ENCODE measurements at regions of chr18 and their contacts with region 1.

Region 1: DNA sequence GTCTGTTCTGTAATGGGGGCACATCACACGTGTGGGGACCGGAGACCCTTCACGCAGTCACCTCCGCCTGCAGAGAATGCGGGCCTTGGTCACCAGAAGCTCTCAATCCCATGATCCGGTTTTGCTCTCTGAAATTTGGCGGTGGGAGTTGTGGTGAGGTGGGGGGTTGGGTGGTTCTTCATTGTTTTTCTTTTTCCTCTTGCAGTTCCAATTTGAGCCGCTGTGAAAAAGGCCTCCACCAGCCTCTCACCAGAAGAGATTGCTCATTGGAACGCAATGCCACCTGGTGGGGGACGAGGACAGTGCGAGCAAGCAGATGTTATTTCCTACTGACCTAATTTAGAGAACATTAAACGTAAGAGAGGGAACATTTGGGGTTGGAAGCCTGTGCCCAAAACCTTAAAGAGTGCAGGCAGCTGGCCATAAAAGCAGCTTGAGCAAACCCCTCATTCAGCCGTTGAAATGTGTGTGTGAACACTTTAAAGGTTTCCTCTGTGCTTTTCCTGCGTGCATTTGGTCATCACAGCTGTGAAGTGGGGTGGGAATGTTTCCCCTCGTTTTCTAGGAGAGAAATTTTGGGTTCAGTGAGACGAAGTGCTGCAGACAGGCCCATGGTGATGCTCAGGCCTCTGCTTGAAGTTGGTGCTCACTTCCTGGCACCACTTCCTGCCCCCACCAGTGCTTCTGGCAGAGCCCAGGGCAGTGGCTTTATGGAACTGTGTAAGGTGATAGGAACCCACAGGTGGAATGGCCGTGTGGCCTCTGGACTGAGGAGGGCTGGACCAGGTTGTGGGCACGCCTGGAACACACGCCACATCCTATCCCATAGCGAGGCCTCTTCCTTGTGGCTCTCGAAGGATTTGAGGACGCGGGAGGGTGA is 61.7 kb downstream of the ZCCHC2 start:
- DNase-seq: peak; percentile 77 to 93
- H3K4me3 ChIP-seq: peak overlapping the region in 1 of 4 experiments; percentile 43; a peak in 2 of 8 replicates
- H3K27ac ChIP-seq: no peak overlapping the region; the same call in 1 of the 2 replicates
- H3K4me1 ChIP-seq: peaks cover 2 to 8% (median 6%) of the 10 kb centered on the region in 4 experiments; a peak in 6 of 7 replicates
- H3K27me3 ChIP-seq: no peaks in the 10 kb centered on the region
- CTCF ChIP-seq: peak; percentile 91 to 100 (median 98)
- EP300 ChIP-seq: no peak
- POLR2A ChIP-seq: no peak
- RAD21 ChIP-seq: peak; percentile 83 to 90

Region 2: DNA sequence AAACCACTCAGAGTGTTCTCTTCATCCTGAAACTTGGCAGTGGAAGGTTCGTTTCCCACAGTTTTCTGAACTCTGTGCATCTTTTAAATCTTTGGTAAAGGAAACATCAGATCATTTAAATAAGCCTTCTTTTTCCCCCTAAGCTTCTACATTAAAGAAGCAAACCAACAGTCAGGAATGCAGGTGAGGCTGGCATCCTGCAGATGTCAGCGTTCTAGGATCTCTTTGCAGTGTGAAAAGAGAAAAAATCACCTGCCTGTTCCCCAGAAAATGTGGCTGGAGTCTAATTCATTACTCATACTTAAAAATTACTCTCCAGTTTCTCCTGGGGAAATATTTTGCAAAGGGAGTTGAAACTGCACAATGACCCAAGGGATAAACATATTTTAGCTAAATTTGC is 126.1 kb before region 1 on chr18:
- CTCF ChIA-PET with region 1: interaction called, 28 read pairs
- POLR2A ChIA-PET with region 1: no interaction called
- DNase-seq: no peak
- H3K4me3 ChIP-seq: no peak overlapping the region
- H3K27ac ChIP-seq: no peak overlapping the region
- H3K4me1 ChIP-seq: peaks cover 0 to 3% (median 0%) of the 10 kb centered on the region in 4 experiments; a peak in 1 of 7 replicates
- H3K27me3 ChIP-seq: no peaks in the 10 kb centered on the region
- CTCF ChIP-seq: peak in 2 of 3 experiments; percentile 18 to 37; a peak in 2 of 4 replicates
- EP300 ChIP-seq: no peak
- POLR2A ChIP-seq: no peak
- RAD21 ChIP-seq: peak in 1 of 2 experiments; percentile 28; a peak in 1 of 4 replicates

Region 3: DNA sequence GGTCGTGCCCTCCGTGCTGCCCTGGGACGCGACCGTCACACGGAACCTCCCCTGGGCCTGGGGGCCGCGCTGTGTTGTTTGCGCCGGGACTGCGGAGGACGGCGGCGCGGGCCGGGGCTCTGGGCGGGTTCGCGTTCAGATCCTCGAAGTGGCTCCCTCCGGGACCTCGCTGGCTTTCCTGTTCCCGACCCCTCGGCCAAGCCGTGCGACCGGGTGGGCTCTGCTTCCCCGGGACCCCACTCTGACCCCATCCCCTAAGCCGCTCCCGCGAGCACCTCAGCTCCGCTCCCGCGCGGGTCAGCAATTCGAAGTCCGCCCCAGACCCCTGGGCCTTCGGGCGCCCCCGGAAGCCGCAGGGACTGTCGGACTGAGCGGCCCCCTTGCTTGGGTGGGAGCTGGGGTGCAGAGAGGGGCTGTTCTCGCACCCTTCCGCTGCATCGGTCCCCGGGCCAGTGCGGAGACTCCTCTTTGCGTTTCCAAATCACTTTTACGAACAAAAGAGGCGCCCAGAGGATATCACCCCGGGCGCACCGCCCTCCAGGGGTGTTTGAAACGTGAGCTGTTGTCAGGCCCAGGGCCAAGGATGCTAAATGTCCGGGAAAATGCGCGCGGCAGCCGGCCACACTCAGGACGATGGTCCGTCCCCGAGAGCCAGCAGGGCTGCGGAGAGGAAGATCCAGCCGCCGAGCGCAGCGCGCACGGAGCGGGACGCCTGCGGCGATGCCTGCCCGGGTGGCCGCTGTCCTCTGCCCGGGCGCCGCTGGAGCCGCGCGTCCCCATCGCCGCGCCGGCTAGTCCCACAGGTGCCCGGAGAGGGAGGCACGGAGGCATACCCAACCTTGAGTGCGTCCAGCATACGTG is 11.9 kb after region 1 on chr18:
- CTCF ChIA-PET with region 1: interaction called, 34 read pairs
- POLR2A ChIA-PET with region 1: no interaction called
- DNase-seq: peak in 1 of 2 experiments; percentile 73
- H3K4me3 ChIP-seq: peak overlapping the region; percentile 42 to 71 (median 62)
- H3K27ac ChIP-seq: no peak overlapping the region
- H3K4me1 ChIP-seq: peaks cover 0 to 3% (median under 1%) of the 10 kb centered on the region in 4 experiments; a peak in 2 of 7 replicates
- H3K27me3 ChIP-seq: peaks cover 16 to 23% (median 22%) of the 10 kb centered on the region in 4 experiments
- CTCF ChIP-seq: no peak
- EP300 ChIP-seq: no peak
- POLR2A ChIP-seq: no peak
- RAD21 ChIP-seq: 0 out of 4 replicates have a peak, but pooled peaks of 1 of the 2 experiments have one; percentile 1

Region 4: GRCh38 chr18:62625019-62625418 is 40.5 kb after region 1 on chr18:
- CTCF ChIA-PET with region 1: interaction called, 13 read pairs
- POLR2A ChIA-PET with region 1: no interaction called
- DNase-seq: no peak
- H3K4me3 ChIP-seq: no peak overlapping the region
- H3K27ac ChIP-seq: no peak overlapping the region
- H3K4me1 ChIP-seq: no peaks in the 10 kb centered on the region
- H3K27me3 ChIP-seq: no peaks in the 10 kb centered on the region
- CTCF ChIP-seq: no peak
- EP300 ChIP-seq: no peak
- POLR2A ChIP-seq: no peak
- RAD21 ChIP-seq: no peak

Region 5: GRCh38 chr18:62957885-62958472 is 373.5 kb after region 1 on chr18:
- CTCF ChIA-PET with region 1: interaction called, 26 read pairs
- POLR2A ChIA-PET with region 1: no interaction called
- DNase-seq: peak; percentile 15 to 87
- H3K4me3 ChIP-seq: no peak overlapping the region
- H3K27ac ChIP-seq: no peak overlapping the region
- H3K4me1 ChIP-seq: peaks cover 0 to 6% (median 2%) of the 10 kb centered on the region in 4 experiments; a peak in 3 of 7 replicates
- H3K27me3 ChIP-seq: no peaks in the 10 kb centered on the region
- CTCF ChIP-seq: peak in 2 of 3 experiments; percentile 47 to 55; a peak in 3 of 4 replicates
- EP300 ChIP-seq: no peak
- POLR2A ChIP-seq: no peak
- RAD21 ChIP-seq: peak; percentile 62 to 64

Region 6: DNA sequence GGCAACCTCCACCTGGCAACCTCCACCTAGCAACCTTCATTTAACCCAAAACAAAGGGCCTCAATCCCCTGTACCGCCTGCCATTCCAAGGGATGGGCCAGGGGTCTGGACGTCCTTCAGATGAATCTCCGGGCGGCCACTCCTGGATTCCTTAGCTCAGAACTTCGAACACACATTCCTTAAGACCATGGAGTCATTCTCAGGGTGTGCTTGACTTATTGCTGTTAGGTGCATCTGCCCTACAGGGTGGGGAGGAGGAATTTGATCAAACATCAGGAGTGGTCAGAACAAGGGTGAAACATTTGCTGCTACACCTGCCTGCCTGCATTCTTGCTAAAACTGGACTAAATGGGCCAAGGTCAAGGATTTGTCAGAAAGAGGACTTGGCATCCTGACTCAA is 408.5 kb after region 1 on chr18:
- CTCF ChIA-PET with region 1: interaction called, 10 read pairs
- POLR2A ChIA-PET with region 1: no interaction called
- DNase-seq: no peak
- H3K4me3 ChIP-seq: no peak overlapping the region
- H3K27ac ChIP-seq: no peak overlapping the region
- H3K4me1 ChIP-seq: no peaks in the 10 kb centered on the region
- H3K27me3 ChIP-seq: no peaks in the 10 kb centered on the region
- CTCF ChIP-seq: no peak
- EP300 ChIP-seq: no peak
- POLR2A ChIP-seq: no peak
- RAD21 ChIP-seq: no peak

Measured in H1 (cell line).